ENCODE measurements at regions of chr12 and their contacts with region 1.

Region 1: GRCh38 chr12:130916251-130916911 is 37.3 kb upstream of the ADGRD1 start:
- DNase-seq: peak; percentile 48
- ATAC-seq: peak; percentile 60
- H3K4me3 Mint-ChIP-seq: peak overlapping the region; percentile 39
- H3K27ac Mint-ChIP-seq: no peak overlapping the region
- H3K4me1 Mint-ChIP-seq: peaks cover 9% of the 10 kb centered on the region
- H3K27me3 Mint-ChIP-seq: peaks cover 35% of the 10 kb centered on the region
- CTCF ChIP-seq: peak; percentile 53

Region 2: GRCh38 chr12:130482448-130482847 is 433.9 kb before region 1 on chr12:
- CTCF ChIA-PET with region 1: no interaction called
- POLR2A ChIA-PET with region 1: no interaction called
- intact Hi-C with region 1: no loop called
- DNase-seq: no peak
- ATAC-seq: no peak
- H3K4me3 Mint-ChIP-seq: no peak overlapping the region
- H3K27ac Mint-ChIP-seq: no peak overlapping the region
- H3K4me1 Mint-ChIP-seq: no peaks in the 10 kb centered on the region
- H3K27me3 Mint-ChIP-seq: no peaks in the 10 kb centered on the region
- CTCF ChIP-seq: no peak

Region 3: DNA sequence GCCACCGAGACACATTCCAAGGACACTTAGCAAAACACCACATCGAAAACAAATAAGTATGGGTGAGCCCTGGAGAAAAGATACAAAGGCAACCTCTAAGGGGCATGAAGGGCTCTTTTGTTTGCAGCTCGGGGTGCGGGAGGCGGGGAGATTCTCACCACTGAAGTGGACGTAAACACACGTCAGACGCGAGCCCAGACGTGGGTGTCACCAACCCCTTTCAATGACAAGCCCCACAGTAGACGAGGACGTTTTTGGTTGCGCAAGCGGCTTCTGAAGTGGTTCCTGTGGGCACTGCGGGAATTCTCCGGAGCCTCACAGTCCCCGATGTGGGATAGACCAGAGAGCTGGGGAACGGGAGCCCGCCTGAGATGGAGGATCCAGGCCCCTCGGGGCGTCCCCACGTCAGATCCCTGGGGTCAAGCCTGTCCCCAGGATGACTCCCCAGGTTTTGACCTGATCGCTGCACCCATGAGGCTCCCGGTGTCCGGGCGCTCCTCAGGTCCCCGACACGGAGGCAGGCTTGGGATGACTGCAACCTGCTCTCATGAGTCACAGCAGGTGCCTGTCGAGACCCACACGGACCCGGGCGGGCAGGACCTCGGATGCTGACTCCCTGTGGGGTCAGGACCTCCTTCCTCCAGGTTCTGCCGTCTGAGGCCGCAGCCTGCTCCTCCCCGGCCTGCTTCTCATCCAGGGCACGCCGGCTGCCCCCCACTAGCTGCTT is 17.1 kb after region 1 on chr12:
- CTCF ChIA-PET with region 1: no interaction called
- POLR2A ChIA-PET with region 1: no interaction called
- intact Hi-C with region 1: no loop called
- DNase-seq: no peak
- ATAC-seq: no peak
- H3K4me3 Mint-ChIP-seq: no peak overlapping the region
- H3K27ac Mint-ChIP-seq: no peak overlapping the region
- H3K4me1 Mint-ChIP-seq: no peaks in the 10 kb centered on the region
- H3K27me3 Mint-ChIP-seq: peaks cover 20% of the 10 kb centered on the region
- CTCF ChIP-seq: no peak

Region 4: GRCh38 chr12:130980939-130981742 is 64.8 kb after region 1 on chr12:
- CTCF ChIA-PET with region 1: no interaction called
- POLR2A ChIA-PET with region 1: no interaction called
- intact Hi-C with region 1: loop called (anchors 1 kb)
- DNase-seq: no peak
- ATAC-seq: no peak
- H3K4me3 Mint-ChIP-seq: peak overlapping the region; percentile 51
- H3K27ac Mint-ChIP-seq: peak overlapping the region; percentile 89
- H3K4me1 Mint-ChIP-seq: peaks cover 49% of the 10 kb centered on the region
- H3K27me3 Mint-ChIP-seq: no peaks in the 10 kb centered on the region
- CTCF ChIP-seq: no peak

Region 5: DNA sequence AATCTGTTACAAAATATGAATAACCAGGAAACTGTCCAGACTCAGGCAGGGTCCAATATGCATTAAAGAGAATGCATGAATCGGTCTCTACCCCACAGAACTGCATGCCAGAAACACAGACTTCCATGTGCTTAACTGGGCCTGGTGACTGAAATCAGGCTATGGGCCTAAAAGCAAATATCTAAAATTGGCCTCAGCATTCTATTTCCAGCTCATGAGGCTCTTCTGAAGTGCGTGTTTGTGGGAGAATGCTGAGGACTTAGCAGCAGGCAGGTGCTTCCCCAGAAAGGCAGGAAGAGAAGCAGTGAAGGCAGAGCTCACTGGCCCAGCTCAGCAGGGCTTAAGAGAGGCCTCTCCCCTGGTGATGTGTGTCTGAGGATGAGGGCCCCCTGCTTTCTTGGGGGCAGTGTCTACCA is 85.8 kb after region 1 on chr12:
- CTCF ChIA-PET with region 1: interaction called, 4 read pairs
- POLR2A ChIA-PET with region 1: no interaction called
- intact Hi-C with region 1: loop called (anchors 1 kb)
- DNase-seq: no peak
- ATAC-seq: no peak
- H3K4me3 Mint-ChIP-seq: no peak overlapping the region
- H3K27ac Mint-ChIP-seq: no peak overlapping the region
- H3K4me1 Mint-ChIP-seq: peaks cover 11% of the 10 kb centered on the region
- H3K27me3 Mint-ChIP-seq: no peaks in the 10 kb centered on the region
- CTCF ChIP-seq: no peak

Region 6: DNA sequence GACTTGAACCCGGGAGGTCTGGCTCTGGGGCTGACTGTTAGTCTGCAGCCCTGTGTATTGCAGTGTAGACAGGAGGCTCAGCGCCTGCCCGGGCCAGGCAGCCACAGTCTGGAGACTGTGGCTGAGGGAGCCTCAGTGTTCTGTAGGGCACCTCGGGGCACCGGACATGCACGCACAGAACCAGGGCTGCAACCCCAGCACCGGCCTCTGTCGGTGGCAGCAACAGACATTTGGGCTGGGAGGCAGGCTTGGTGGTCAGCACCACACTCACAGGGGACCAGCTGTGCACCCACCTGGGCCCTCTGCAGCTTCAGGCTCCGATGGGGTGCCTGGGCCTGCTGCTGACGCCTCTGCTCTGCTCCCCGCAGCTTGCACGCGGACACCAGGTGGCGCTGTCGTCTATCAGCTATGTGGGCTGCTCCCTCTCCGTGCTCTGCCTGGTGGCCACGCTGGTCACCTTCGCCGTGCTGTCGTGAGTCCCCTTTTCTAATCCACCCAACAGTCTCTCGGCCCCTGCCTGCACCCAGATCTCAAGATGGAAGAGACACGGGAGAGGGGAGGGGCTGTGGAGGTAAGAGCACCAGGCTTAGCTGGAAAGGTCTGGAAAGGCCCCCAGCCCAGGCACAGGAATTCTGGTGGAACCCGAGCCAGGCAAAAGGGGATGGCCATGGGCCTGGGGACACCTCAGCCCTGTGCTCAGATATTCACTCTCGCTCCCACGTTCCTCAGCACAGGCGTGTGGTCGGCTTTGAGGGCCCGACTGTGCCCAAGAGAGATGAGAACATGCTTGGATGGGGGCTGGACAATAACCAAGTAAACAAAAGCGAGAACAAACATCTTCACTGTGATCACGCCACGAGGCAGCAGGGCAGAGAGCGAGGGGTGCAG is 188.3 kb after region 1 on chr12:
- CTCF ChIA-PET with region 1: interaction called, 11 read pairs
- POLR2A ChIA-PET with region 1: no interaction called
- intact Hi-C with region 1: loop called (anchors 1 kb)
- DNase-seq: peak; percentile 66
- ATAC-seq: peak; percentile 75
- H3K4me3 Mint-ChIP-seq: no peak overlapping the region
- H3K27ac Mint-ChIP-seq: no peak overlapping the region
- H3K4me1 Mint-ChIP-seq: peaks cover 15% of the 10 kb centered on the region
- H3K27me3 Mint-ChIP-seq: peaks cover 8% of the 10 kb centered on the region
- CTCF ChIP-seq: peak; percentile 68

Region 7: GRCh38 chr12:131132118-131132892 is 215.9 kb after region 1 on chr12:
- CTCF ChIA-PET with region 1: interaction called, 83 read pairs
- POLR2A ChIA-PET with region 1: no interaction called
- intact Hi-C with region 1: no loop called
- DNase-seq: peak; percentile 72
- ATAC-seq: peak; percentile 77
- H3K4me3 Mint-ChIP-seq: no peak overlapping the region
- H3K27ac Mint-ChIP-seq: no peak overlapping the region
- H3K4me1 Mint-ChIP-seq: no peaks in the 10 kb centered on the region
- H3K27me3 Mint-ChIP-seq: peaks cover 2% of the 10 kb centered on the region
- CTCF ChIP-seq: no peak

Region 8: DNA sequence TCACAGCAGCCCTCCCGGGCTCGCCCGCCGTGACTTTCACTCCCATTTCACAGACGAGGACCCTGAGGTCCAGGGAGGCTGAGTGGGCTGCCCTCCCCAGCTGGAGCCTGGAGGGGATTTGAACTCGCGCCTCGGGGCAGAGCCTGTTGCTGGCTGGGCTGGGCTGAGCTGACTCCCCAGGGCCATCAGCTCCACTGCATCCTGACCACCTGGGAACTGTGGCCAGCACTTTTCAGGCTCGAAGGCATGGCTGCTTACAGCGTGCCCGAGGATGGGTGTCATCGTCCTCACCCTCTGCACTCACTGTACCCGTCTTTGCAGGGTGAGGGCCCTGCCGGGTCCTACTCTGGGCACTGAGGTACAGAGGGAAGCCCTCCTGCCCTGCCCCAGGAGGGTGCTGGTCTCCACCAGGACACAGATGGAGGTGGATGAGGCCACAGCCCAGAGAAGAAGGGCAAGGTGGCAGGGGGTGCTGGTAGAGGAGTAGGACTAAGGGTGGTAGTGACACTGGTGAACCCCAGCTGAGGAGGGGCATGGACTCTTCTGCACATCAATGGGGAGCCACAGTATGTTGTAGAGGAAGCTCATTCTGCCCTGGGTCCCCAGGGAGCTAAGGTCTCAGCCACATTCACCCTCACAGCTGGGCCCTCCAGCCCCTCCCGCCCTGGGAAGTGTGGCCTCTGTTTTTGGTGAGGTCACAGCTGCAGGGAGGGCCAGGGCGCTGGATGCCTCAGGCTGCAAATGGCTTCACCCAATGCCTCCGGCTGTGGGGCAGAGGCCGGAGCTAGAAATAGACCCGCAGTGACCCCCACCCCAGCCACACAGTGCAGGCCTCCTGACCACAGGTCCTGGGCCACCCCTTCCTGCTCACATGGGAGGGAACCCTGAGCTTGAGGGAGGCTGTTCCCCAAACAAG is 429.4 kb after region 1 on chr12:
- CTCF ChIA-PET with region 1: no interaction called
- POLR2A ChIA-PET with region 1: no interaction called
- intact Hi-C with region 1: no loop called
- DNase-seq: no peak
- ATAC-seq: no peak
- H3K4me3 Mint-ChIP-seq: no peak overlapping the region
- H3K27ac Mint-ChIP-seq: no peak overlapping the region
- H3K4me1 Mint-ChIP-seq: no peaks in the 10 kb centered on the region
- H3K27me3 Mint-ChIP-seq: peaks cover 2% of the 10 kb centered on the region
- CTCF ChIP-seq: no peak

Region 9: GRCh38 chr12:131608740-131609690 is 692.6 kb after region 1 on chr12:
- CTCF ChIA-PET with region 1: no interaction called
- POLR2A ChIA-PET with region 1: no interaction called
- intact Hi-C with region 1: loop called (anchors 10 kb)
- DNase-seq: peak; percentile 26
- ATAC-seq: peak; percentile 54
- H3K4me3 Mint-ChIP-seq: no peak overlapping the region
- H3K27ac Mint-ChIP-seq: no peak overlapping the region
- H3K4me1 Mint-ChIP-seq: peaks cover 10% of the 10 kb centered on the region
- H3K27me3 Mint-ChIP-seq: peaks cover 35% of the 10 kb centered on the region
- CTCF ChIP-seq: no peak

Region 10: DNA sequence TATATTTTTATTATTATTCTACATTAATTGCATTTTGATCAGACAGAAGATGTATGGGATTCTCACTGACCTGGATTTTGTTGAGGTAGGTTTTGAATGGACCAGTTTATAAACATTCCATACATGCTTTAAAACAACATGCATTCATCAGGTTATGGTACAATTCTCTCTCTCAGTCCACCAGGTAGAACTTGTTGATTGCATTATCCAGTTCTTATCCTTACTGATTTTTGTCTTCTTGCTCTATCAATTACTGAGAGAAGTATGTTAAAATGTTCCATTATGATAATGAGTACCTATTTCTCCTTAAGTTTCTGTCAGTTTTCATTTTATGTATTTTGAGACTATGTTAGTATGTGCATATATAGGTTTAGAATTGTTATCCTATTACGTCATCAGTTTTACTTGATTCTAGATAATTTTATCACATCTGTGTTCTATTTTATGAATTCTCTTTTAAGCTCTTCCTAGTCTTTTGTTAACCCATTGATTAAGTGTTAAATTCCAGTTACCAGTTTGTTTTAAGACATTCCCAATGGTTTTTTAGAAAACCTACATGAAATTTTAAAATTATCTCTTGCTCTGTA is 1084.0 kb after region 1 on chr12:
- CTCF ChIA-PET with region 1: no interaction called
- POLR2A ChIA-PET with region 1: no interaction called
- intact Hi-C with region 1: loop called (anchors 2 kb)
- DNase-seq: no peak
- ATAC-seq: no peak
- H3K4me3 Mint-ChIP-seq: no peak overlapping the region
- H3K27ac Mint-ChIP-seq: no peak overlapping the region
- H3K4me1 Mint-ChIP-seq: no peaks in the 10 kb centered on the region
- H3K27me3 Mint-ChIP-seq: no peaks in the 10 kb centered on the region
- CTCF ChIP-seq: no peak